Activated CD4-positive, alpha-beta T cell treated with anti-CD3 and anti-CD28 coated beads for 36 hours (primary cell): ENCODE measurements at regions of chr5 and their contacts with region 1.

Region 1: DNA sequence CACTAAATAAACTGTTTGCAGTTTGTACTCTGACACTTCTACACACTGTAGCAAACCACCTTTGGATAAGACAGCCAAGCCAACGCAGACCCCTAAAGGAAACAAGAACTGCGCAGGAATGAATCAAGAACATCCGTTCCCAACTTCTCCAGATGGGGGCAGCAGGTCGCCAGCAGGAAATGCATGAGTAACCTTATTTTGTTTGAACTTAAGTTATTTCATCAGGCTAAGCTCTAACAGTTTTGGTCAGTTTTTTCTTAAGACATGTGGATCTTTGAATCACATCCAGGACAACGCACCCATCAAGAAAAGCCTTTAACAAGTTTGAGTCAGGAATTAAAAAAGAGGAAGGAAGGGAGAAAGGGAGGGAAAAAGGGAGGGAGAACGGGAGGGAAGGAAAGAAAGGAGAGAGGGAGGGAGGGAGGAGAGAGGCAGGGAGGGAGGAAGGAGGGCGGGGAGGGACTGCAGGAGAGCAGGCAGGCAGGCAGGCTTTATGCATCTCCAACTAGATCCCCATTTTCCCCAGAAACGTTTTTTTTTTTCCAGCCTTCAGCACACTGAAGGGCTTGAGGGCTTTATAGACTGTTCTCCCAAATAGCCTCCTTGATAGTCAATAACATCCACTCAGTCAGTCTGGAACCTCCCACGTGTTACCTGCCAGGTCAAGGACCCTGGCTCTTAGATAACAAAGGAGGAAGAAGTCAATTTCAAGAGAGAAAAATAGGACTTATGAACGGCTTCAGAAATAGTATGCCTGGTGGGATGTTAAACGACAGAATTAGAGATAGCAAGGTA is 22.2 kb downstream of the BHMT start:
- DNase-seq: peak; percentile 85
- ATAC-seq: peak; percentile 92
- H3K4me3 Mint-ChIP-seq: peak overlapping the region; percentile 51
- H3K27ac Mint-ChIP-seq: peak overlapping the region; percentile 95
- H3K4me1 Mint-ChIP-seq: peaks cover 15% of the 10 kb centered on the region
- H3K27me3 Mint-ChIP-seq: peaks cover 3% of the 10 kb centered on the region

Region 2: GRCh38 chr5:78927657-78928282 is 206.1 kb before region 1 on chr5:
- CTCF ChIA-PET with region 1: no interaction called
- POLR2A ChIA-PET with region 1: no interaction called
- intact Hi-C with region 1: no loop called
- DNase-seq: no peak
- ATAC-seq: no peak
- H3K4me3 Mint-ChIP-seq: no peak overlapping the region
- H3K27ac Mint-ChIP-seq: no peak overlapping the region
- H3K4me1 Mint-ChIP-seq: no peaks in the 10 kb centered on the region
- H3K27me3 Mint-ChIP-seq: no peaks in the 10 kb centered on the region

Region 3: GRCh38 chr5:79011219-79011836 is 122.5 kb before region 1 on chr5:
- CTCF ChIA-PET with region 1: interaction called, 21 read pairs
- POLR2A ChIA-PET with region 1: no interaction called
- intact Hi-C with region 1: no loop called
- DNase-seq: no peak
- ATAC-seq: no peak
- H3K4me3 Mint-ChIP-seq: no peak overlapping the region
- H3K27ac Mint-ChIP-seq: no peak overlapping the region
- H3K4me1 Mint-ChIP-seq: no peaks in the 10 kb centered on the region
- H3K27me3 Mint-ChIP-seq: peaks cover 10% of the 10 kb centered on the region

Region 4: GRCh38 chr5:79030663-79031484 is 103.0 kb before region 1 on chr5:
- CTCF ChIA-PET with region 1: interaction called, 299 read pairs
- POLR2A ChIA-PET with region 1: no interaction called
- intact Hi-C with region 1: no loop called
- DNase-seq: no peak
- ATAC-seq: no peak
- H3K4me3 Mint-ChIP-seq: no peak overlapping the region
- H3K27ac Mint-ChIP-seq: no peak overlapping the region
- H3K4me1 Mint-ChIP-seq: no peaks in the 10 kb centered on the region
- H3K27me3 Mint-ChIP-seq: peaks cover 12% of the 10 kb centered on the region

Region 5: DNA sequence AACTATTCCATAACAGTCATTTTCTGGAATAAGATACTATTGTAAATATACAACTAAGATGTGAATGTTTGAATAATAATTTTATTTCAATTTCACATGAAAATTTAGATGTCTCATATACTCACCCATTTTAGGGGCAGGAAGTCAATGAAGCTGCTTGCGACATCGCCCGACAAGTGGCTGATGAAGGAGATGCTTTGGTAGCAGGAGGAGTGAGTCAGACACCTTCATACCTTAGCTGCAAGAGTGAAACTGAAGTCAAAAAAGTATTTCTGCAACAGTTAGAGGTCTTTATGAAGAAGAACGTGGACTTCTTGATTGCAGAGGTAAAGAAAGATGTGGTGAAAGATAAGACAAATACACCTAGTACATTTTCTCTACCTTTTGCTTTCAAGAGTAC is 13.6 kb before region 1 on chr5:
- CTCF ChIA-PET with region 1: interaction called, 26 read pairs
- POLR2A ChIA-PET with region 1: no interaction called
- intact Hi-C with region 1: no loop called
- DNase-seq: peak; percentile 31
- ATAC-seq: peak; percentile 49
- H3K4me3 Mint-ChIP-seq: no peak overlapping the region
- H3K27ac Mint-ChIP-seq: no peak overlapping the region
- H3K4me1 Mint-ChIP-seq: peaks cover 2% of the 10 kb centered on the region
- H3K27me3 Mint-ChIP-seq: peaks cover 10% of the 10 kb centered on the region

Region 6: GRCh38 chr5:79235634-79236363 is 101.9 kb after region 1 on chr5 and contains the start of gene JMY:
- CTCF ChIA-PET with region 1: interaction called, 3 read pairs
- POLR2A ChIA-PET with region 1: no interaction called
- intact Hi-C with region 1: loop called (anchors 1 to 5 kb)
- DNase-seq: peak; percentile 93
- ATAC-seq: peak; percentile 78
- H3K4me3 Mint-ChIP-seq: peak within 1 kb of the TSS; percentile 97
- H3K27ac Mint-ChIP-seq: peak within 1 kb of the TSS; percentile 99
- H3K4me1 Mint-ChIP-seq: peaks cover 25% of the 10 kb centered on the region
- H3K27me3 Mint-ChIP-seq: no peaks in the 10 kb centered on the region
- total RNA-seq, gene JMY: 7.3 to 7.4 TPM

Region 7: DNA sequence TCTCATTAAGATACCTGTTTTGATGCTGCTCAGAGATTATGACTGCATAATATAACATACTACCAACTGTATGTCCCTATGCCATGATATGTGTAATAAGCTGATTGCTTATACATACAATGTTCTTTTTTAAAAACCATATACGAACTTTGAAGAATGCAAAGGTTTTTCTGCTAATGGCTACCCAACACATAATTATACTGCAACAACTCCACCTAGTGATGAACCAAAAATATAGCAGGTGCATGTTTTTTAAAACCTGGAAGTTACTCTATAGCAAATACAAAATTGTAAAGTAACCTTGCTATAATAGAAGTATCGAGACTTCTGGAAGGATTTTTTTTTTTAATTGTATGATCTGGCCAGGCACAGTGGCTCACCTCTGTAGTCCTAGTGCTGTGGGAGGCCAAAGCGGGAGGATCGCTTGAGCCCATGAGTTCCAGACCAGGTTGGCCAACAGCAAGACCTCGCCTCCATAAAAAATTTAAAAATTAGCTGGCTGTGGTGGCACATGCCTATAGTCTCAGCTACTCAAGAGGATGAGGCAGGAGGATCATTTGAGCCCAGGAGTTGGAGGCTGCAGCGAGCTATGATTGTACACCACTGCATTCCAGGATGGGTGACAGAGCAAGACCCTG is 331.0 kb after region 1 on chr5:
- CTCF ChIA-PET with region 1: interaction called, 47 read pairs
- POLR2A ChIA-PET with region 1: no interaction called
- intact Hi-C with region 1: loop called in 1 of 2 experiments (anchors 1 kb)
- DNase-seq: no peak
- ATAC-seq: peak; percentile 30
- H3K4me3 Mint-ChIP-seq: no peak overlapping the region
- H3K27ac Mint-ChIP-seq: no peak overlapping the region
- H3K4me1 Mint-ChIP-seq: no peaks in the 10 kb centered on the region
- H3K27me3 Mint-ChIP-seq: peaks cover 3% of the 10 kb centered on the region

Region 8: GRCh38 chr5:80083101-80083890 is 949.4 kb after region 1 on chr5:
- CTCF ChIA-PET with region 1: interaction called, 5 read pairs
- POLR2A ChIA-PET with region 1: no interaction called
- intact Hi-C with region 1: loop called in 1 of 2 experiments (anchors 1 kb)
- DNase-seq: peak; percentile 40
- ATAC-seq: peak; percentile 82
- H3K4me3 Mint-ChIP-seq: peak overlapping the region; percentile 41
- H3K27ac Mint-ChIP-seq: peak overlapping the region; percentile 76
- H3K4me1 Mint-ChIP-seq: peaks cover 12% of the 10 kb centered on the region
- H3K27me3 Mint-ChIP-seq: no peaks in the 10 kb centered on the region